ENCODE measurements at regions of chr1 and their contacts with region 1.

Region 1: GRCh38 chr1:245085508-245086095 is 69.2 kb upstream of the KIF26B start:
- DNase-seq: no peak
- H3K4me3 Mint-ChIP-seq: no peak overlapping the region
- H3K27ac Mint-ChIP-seq: no peak overlapping the region
- H3K4me1 Mint-ChIP-seq: peaks cover 7% of the 10 kb centered on the region
- H3K27me3 Mint-ChIP-seq: no peaks in the 10 kb centered on the region
- CTCF ChIP-seq: no peak

Region 2: DNA sequence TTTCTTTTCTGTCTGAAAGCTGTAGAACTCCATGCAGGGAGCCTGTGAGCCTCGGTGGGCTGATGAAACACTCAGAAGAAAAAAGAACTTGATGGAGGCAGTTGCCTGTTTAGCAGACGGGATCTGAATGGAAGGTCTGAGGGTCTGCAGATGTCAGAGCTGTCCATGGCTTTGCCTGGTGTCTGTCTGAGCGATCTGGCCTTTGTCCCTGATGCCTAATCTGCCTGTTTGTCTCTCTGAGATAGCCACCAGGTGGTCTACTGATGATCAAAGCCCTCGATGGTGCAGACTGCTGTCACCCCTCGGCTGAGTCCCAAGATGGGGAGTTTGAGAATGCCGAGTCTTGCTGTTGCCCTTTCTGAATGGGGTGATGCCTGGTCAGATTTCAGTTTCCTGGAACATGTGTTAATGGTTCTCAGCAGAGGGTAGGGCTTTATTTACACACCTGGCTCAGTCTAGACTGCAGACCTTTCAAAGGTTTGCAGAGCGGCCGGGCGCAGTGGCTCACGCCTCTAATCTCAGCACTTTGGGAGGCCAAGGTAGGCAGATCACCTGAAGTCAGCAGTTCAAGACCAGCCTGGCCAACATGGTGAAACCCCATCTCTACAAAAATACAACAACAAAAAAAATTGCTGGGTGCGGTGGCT is 159.5 kb after region 1 on chr1:
- CTCF ChIA-PET with region 1: no interaction called
- intact Hi-C with region 1: no loop called
- DNase-seq: peak; percentile 62
- H3K4me3 Mint-ChIP-seq: no peak overlapping the region
- H3K27ac Mint-ChIP-seq: no peak overlapping the region
- H3K4me1 Mint-ChIP-seq: no peaks in the 10 kb centered on the region
- H3K27me3 Mint-ChIP-seq: no peaks in the 10 kb centered on the region
- CTCF ChIP-seq: no peak

Region 3: DNA sequence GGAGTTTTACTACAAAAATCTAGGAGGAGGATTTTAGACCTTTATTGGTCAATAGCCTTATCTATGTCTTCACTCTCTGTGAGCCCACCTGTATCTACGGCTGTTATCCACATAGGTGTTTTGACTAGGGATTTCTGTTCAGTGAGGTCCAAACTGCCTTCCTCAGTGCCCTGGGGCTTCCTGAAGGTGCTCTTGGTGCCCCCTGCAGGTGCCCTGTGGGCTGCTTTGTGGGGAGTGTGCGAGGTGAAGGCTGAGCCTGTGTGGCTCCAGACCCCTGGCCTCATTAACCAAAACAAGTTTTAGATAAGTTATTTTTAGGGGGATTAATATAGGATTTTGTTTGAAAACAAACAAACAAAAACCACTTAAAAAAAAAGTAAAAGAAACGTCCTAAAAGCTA is 191.7 kb after region 1 on chr1:
- CTCF ChIA-PET with region 1: no interaction called
- intact Hi-C with region 1: loop called (anchors 10 kb)
- DNase-seq: peak; percentile 59
- H3K4me3 Mint-ChIP-seq: no peak overlapping the region
- H3K27ac Mint-ChIP-seq: no peak overlapping the region
- H3K4me1 Mint-ChIP-seq: no peaks in the 10 kb centered on the region
- H3K27me3 Mint-ChIP-seq: no peaks in the 10 kb centered on the region
- CTCF ChIP-seq: peak; percentile 35

Region 4: GRCh38 chr1:245715970-245716369 is 630.4 kb after region 1 on chr1:
- CTCF ChIA-PET with region 1: no interaction called
- intact Hi-C with region 1: no loop called
- DNase-seq: peak; percentile 14
- H3K4me3 Mint-ChIP-seq: no peak overlapping the region
- H3K27ac Mint-ChIP-seq: no peak overlapping the region
- H3K4me1 Mint-ChIP-seq: no peaks in the 10 kb centered on the region
- H3K27me3 Mint-ChIP-seq: no peaks in the 10 kb centered on the region
- CTCF ChIP-seq: no peak